Activated CD8-positive, alpha-beta memory T cell treated with anti-CD3 and anti-CD28 coated beads, Interleukin-2, amount 10 ng/mL, durations not matched to agents 7 days and 5 days (primary cell): ENCODE measurements at regions of chr14 and their contacts with region 1.

Region 1: GRCh38 chr14:23120541-23121251 is 1.6 kb upstream of the CEBPE start:
- DNase-seq: peak; percentile 91
- ATAC-seq: peak; percentile 84
- H3K4me3 Mint-ChIP-seq: peak overlapping the region; percentile 22
- H3K27ac Mint-ChIP-seq: peak overlapping the region; percentile 91
- H3K4me1 Mint-ChIP-seq: peaks cover 35% of the 10 kb centered on the region
- H3K27me3 Mint-ChIP-seq: no peaks in the 10 kb centered on the region

Region 2: DNA sequence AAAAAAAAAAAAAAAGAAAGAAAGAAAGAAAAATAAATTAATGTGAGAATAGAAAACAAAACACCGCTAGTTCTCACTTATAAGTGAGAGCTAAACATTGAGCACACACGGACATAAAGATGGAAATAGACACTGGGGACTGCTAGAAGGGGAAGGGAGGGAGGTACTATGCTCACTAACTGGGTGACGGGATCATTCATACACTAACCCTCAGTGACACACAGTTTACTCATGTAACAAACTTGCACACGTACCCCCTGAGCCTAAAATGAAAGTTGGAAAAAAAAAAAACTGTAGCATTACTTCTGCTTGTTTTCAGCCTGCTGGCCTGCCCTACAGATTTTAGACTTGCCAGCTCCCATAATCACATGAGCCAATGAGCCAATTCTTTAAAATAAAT is 181.0 kb before region 1 on chr14:
- CTCF ChIA-PET with region 1: no interaction called
- DNase-seq: no peak
- ATAC-seq: no peak
- H3K4me3 Mint-ChIP-seq: no peak overlapping the region
- H3K27ac Mint-ChIP-seq: no peak overlapping the region
- H3K4me1 Mint-ChIP-seq: no peaks in the 10 kb centered on the region
- H3K27me3 Mint-ChIP-seq: no peaks in the 10 kb centered on the region

Region 3: GRCh38 chr14:23006544-23007419 is 113.9 kb before region 1 on chr14:
- CTCF ChIA-PET with region 1: interaction called, 16 read pairs
- DNase-seq: peak; percentile 98
- ATAC-seq: peak; percentile 97
- H3K4me3 Mint-ChIP-seq: peak overlapping the region; percentile 93
- H3K27ac Mint-ChIP-seq: peak overlapping the region; percentile 96
- H3K4me1 Mint-ChIP-seq: peaks cover 44% of the 10 kb centered on the region
- H3K27me3 Mint-ChIP-seq: no peaks in the 10 kb centered on the region

Region 4: DNA sequence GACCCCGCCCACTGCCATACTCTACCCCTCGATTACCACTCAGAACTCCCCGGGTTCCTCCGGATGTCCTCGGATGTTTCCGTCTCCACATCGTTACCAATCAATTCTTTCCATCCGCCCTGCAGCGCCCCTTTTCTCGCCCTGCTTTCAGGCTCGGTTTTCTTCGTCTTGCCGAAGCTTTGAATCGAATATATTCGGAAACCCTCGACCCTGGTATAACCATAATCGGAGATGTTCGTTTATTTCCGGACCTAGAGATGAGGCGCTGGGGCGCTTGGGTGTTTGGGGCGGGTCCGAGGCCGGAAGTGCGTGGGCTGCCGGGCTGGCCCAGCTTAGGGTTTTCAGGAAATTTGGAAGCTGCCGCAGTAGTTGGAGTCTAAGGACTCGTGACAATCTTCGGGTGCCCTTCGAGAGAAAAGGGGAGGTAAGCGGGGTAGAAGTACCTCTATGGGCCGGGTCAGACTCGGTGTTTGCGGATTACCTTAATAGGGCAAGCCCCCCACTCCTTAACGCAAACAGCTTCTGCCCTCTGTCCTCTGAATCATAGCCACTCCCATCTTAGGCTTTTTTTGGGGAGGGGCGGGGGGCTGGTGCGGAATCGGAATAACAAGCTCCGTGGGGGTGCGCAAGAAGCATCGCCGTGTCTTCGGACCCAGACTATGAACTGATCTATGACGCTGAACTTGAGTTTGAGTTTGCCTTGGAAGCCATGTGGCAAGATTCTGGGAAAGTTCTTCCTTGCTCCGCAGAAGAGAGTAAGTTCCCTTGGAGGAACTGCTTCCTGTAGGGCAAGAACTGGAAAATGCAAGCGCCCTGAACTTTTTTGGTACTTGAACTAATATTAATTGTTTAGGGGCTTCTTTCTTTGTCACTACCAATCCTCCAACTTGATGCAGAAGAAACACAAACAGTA is 25.2 kb before region 1 on chr14 and contains the start of gene C14orf119:
- CTCF ChIA-PET with region 1: interaction called, 61 read pairs
- DNase-seq: peak; percentile 100
- ATAC-seq: peak; percentile 94
- H3K4me3 Mint-ChIP-seq: no peak within 1 kb of the TSS
- H3K27ac Mint-ChIP-seq: no peak within 1 kb of the TSS
- H3K4me1 Mint-ChIP-seq: peaks cover 36% of the 10 kb centered on the region
- H3K27me3 Mint-ChIP-seq: no peaks in the 10 kb centered on the region
- total RNA-seq, gene C14orf119: 44.6 to 53.2 TPM

Region 5: GRCh38 chr14:23148591-23149249 is 28.0 kb after region 1 on chr14:
- CTCF ChIA-PET with region 1: interaction called, 17 read pairs
- DNase-seq: no peak
- ATAC-seq: no peak
- H3K4me3 Mint-ChIP-seq: no peak overlapping the region
- H3K27ac Mint-ChIP-seq: no peak overlapping the region
- H3K4me1 Mint-ChIP-seq: no peaks in the 10 kb centered on the region
- H3K27me3 Mint-ChIP-seq: peaks cover under 1% of the 10 kb centered on the region

Region 6: GRCh38 chr14:23286020-23286905 is 165.6 kb after region 1 on chr14 and contains the start of gene HOMEZ:
- CTCF ChIA-PET with region 1: interaction called, 51 read pairs
- DNase-seq: peak; percentile 99
- ATAC-seq: peak; percentile 99
- H3K4me3 Mint-ChIP-seq: peak within 1 kb of the TSS; percentile 86
- H3K27ac Mint-ChIP-seq: peak within 1 kb of the TSS; percentile 88
- H3K4me1 Mint-ChIP-seq: peaks cover 19% of the 10 kb centered on the region
- H3K27me3 Mint-ChIP-seq: no peaks in the 10 kb centered on the region
- total RNA-seq, gene HOMEZ: 11.4 to 12.4 TPM

Region 7: GRCh38 chr14:23320774-23321571 is 200.3 kb after region 1 on chr14 and contains the start of gene PABPN1:
- CTCF ChIA-PET with region 1: interaction called, 39 read pairs
- DNase-seq: peak; percentile 100
- ATAC-seq: peak; percentile 90
- H3K4me3 Mint-ChIP-seq: peak within 1 kb of the TSS; percentile 91
- H3K27ac Mint-ChIP-seq: peak within 1 kb of the TSS; percentile 94
- H3K4me1 Mint-ChIP-seq: peaks cover 32% of the 10 kb centered on the region
- H3K27me3 Mint-ChIP-seq: no peaks in the 10 kb centered on the region
- total RNA-seq, gene PABPN1: 225 to 269 TPM